ENCODE measurements at regions of chr5 and their contacts with region 1.

Region 1: DNA sequence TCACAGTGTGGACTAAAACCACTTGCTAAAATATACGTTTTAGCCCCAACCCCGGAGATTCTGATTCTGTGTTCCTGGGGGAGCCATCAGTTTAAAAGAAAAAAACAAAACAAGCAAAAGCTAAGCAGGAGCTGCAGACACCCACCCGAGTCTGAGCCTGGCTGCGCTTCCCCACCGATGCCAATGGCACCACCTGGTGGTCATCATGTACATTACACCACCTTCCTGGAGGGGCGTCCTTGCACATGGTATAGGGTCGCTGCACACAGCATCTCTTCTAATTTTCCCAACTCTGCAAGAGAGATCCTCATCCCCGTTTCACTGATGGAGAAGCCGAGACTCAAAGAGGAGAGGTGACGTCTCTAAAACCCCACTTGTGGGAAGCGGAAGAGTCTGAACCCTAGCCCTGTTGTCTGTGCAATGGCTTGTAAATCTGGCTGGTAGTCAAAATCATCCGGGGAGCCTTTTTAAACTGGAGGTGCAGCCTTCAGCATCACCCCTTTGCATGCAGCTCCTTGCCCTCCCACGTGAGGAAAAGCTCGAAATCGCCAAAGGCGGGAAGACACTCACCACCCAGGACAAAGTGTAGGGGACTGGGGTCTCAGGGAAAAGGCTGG is 23.1 kb upstream of the CNOT6 start:
- DNase-seq: peak; percentile 70
- ATAC-seq: peak; percentile 22 to 70; a peak in 3 of 6 replicates
- H3K4me3 ChIP-seq: no peak overlapping the region
- H3K27ac ChIP-seq: peak overlapping the region in 1 of 2 experiments; percentile 61; a peak in 4 of 6 replicates
- H3K4me1 ChIP-seq: peaks cover 40% of the 10 kb centered on the region
- CTCF ChIP-seq: peak; percentile 93
- EP300 ChIP-seq: no peak
- POLR2A ChIP-seq: no peak
- RAD21 ChIP-seq: peak; percentile 93 to 95

Region 2: GRCh38 chr5:180291943-180292831 is 178.9 kb before region 1 on chr5 and contains the start of gene MAPK9:
- CTCF ChIA-PET with region 1: interaction called, 344 read pairs
- POLR2A ChIA-PET with region 1: interaction called, 3 read pairs
- DNase-seq: peak; percentile 76 to 77
- ATAC-seq: peak; percentile 82 to 83
- H3K4me3 ChIP-seq: peak within 1 kb of the TSS; percentile 74
- H3K27ac ChIP-seq: peak within 1 kb of the TSS; percentile 85 to 97
- H3K4me1 ChIP-seq: peaks cover 18% of the 10 kb centered on the region
- CTCF ChIP-seq: no peak; the same call in 2 of the 3 replicates
- EP300 ChIP-seq: no peak
- POLR2A ChIP-seq: peak; percentile 71
- RAD21 ChIP-seq: no peak
- polyA plus RNA-seq, gene MAPK9: 52.7 and 66.9 TPM in 2 replicates

Region 3: GRCh38 chr5:180315762-180316212 is 155.3 kb before region 1 on chr5:
- CTCF ChIA-PET with region 1: interaction called, 20 read pairs
- POLR2A ChIA-PET with region 1: no interaction called
- DNase-seq: peak; percentile 54 to 67
- ATAC-seq: peak; percentile 85 to 95
- H3K4me3 ChIP-seq: no peak overlapping the region
- H3K27ac ChIP-seq: no peak overlapping the region
- H3K4me1 ChIP-seq: no peaks in the 10 kb centered on the region
- CTCF ChIP-seq: peak; percentile 78
- EP300 ChIP-seq: no peak
- POLR2A ChIP-seq: no peak
- RAD21 ChIP-seq: peak; percentile 56 to 66

Region 4: DNA sequence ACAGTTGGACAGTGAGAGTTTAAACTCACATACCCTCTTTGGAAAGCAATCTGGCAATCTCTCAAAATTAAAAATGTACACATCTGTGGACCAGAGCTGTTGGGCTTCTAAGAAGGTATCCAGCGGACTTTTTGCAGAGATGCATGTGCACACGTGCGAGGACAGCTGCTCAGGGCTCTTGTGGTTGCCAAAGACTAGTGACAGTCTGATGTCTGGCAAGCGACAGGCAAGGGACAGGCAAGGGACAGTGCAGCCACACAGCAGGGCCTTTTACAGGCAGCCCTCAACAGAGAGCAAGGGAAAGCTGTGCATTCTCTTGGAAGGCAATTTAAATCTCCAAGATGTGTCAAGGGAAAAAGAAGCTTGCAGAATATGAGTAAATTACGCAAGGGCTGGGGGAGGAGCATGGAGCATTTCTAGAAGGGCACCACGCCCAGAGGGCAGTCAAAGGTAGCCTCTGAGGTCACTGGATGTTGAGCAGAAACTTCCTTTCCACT is 127.2 kb before region 1 on chr5:
- CTCF ChIA-PET with region 1: interaction called, 30 read pairs
- POLR2A ChIA-PET with region 1: no interaction called
- DNase-seq: peak in 1 of 2 experiments; percentile 41
- ATAC-seq: peak; percentile 37 to 54; a peak in 3 of 6 replicates
- H3K4me3 ChIP-seq: no peak overlapping the region
- H3K27ac ChIP-seq: peak overlapping the region; percentile 37 to 71; a peak in 4 of 6 replicates
- H3K4me1 ChIP-seq: peaks cover 35% of the 10 kb centered on the region
- CTCF ChIP-seq: no peak
- EP300 ChIP-seq: no peak
- POLR2A ChIP-seq: no peak
- RAD21 ChIP-seq: no peak

Region 5: GRCh38 chr5:180455873-180456272 is 15.2 kb before region 1 on chr5:
- CTCF ChIA-PET with region 1: interaction called, 27 read pairs
- POLR2A ChIA-PET with region 1: no interaction called
- DNase-seq: no peak
- ATAC-seq: no peak
- H3K4me3 ChIP-seq: no peak overlapping the region
- H3K27ac ChIP-seq: no peak overlapping the region
- H3K4me1 ChIP-seq: no peaks in the 10 kb centered on the region
- CTCF ChIP-seq: no peak
- EP300 ChIP-seq: no peak
- POLR2A ChIP-seq: no peak
- RAD21 ChIP-seq: no peak

Measured in A549 (cell line).